Aorta (tissue), 5 donors: ENCODE measurements at regions of chr22 and their contacts with region 1.

Region 1: DNA sequence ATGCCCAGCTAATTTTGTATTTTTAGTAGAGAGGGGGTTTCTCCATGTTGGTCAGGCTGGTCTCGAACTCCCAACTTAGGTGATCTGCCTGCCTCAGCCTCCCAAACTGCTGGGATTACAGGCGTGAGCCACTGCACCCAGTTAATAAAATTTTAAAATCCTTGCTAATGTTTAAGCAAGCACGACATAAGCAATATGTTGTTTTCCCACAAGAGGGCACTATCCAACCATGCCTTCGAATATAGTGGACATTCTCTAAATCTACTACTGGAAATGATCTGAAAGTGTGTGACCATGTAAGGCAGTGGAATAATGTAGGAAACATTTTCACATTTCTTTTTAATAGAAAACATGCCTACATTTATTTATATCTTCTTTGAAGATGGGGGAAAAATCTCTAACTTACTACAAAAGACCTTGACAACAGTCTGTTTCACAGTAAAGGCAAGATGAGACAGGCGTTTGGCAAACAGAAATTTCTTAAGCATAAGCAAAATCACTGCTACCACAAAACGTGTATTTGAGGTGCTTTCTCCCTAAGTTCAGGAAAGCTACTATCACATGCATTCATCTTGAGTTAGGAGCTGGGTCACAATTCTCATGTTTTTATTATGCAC is 38.2 kb downstream of the PITPNB start:
- DNase-seq: no peak
- ATAC-seq: peak; percentile 91
- H3K4me3 ChIP-seq: peak overlapping the region in 1 of 2 donors; percentile 34
- H3K27ac ChIP-seq: peak overlapping the region; percentile 2 to 77
- H3K4me1 ChIP-seq: peaks cover under 1 to 3% of the 10 kb centered on the region in 2 donors
- H3K27me3 ChIP-seq: no peaks in the 10 kb centered on the region

Region 2: DNA sequence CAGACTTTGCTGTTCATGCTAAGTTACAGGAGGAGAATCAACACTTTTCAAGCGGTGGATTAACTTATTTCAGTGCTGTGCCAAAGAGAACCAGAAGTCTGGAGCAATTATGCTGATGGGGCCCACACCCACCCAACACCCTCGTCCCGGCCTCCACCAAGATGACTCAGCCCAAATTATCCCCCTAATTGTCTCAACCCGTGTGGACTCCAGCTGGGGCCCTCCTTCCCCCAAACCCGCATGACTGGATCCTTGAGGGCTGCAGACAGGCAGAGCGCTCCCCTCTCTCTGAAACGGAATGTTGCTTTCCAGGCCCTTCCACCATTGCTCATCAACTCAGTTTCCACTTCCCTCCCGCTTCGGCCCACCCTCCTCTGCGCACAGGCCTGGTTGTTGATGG is 44.7 kb before region 1 on chr22:
- intact Hi-C with region 1: no loop called
- DNase-seq: peak in 1 of 2 donors; percentile 24
- ATAC-seq: no peak
- H3K4me3 ChIP-seq: no peak overlapping the region
- H3K27ac ChIP-seq: no peak overlapping the region
- H3K4me1 ChIP-seq: no peaks in the 10 kb centered on the region
- H3K27me3 ChIP-seq: no peaks in the 10 kb centered on the region

Region 3: DNA sequence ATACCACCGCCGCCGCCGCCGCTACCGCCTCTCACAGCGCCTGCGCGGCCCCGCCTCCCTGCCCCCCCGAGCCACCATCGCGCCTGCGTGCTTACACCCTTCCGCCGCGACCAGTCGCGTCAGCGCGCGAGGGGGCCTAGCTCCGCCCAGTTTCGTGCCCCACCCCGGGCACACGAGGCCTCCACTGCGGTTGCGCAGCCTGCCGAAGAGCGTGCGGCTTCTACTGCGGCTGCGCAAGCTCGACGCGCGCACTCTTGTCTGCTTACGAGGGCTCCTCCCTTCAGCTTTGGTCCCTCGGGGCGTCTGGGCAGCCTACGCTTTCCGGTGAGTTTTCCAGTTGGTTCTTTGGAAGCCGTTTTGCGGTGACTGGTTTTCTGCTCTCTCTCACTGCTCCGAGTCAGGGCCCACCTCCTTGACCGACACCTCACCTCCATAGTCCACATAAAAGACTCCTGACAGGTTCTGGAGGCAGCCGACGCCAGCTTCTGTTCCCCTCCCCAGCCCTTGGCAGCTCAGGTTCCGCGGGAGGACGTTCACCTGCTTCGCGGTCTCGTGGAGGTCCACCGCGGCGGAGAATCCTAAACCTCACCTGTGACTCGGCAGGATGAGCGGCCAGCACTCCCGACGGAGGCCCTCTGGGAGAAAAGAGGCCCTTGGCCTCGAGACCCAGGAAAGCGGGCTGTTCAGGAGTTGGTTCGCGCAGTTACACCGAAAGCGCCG is 38.5 kb after region 1 on chr22 and contains the start of gene PITPNB:
- intact Hi-C with region 1: loop called (anchors 2 to 5 kb)
- DNase-seq: peak; percentile 99 to 100
- ATAC-seq: peak; percentile 99
- H3K4me3 ChIP-seq: peak within 1 kb of the TSS; percentile 32 to 74
- H3K27ac ChIP-seq: peak within 1 kb of the TSS; percentile 86 to 100
- H3K4me1 ChIP-seq: peaks cover 2 to 5% of the 10 kb centered on the region in 2 donors
- H3K27me3 ChIP-seq: no peaks in the 10 kb centered on the region
- total RNA-seq, gene PITPNB: 130 to 162 TPM

Region 4: DNA sequence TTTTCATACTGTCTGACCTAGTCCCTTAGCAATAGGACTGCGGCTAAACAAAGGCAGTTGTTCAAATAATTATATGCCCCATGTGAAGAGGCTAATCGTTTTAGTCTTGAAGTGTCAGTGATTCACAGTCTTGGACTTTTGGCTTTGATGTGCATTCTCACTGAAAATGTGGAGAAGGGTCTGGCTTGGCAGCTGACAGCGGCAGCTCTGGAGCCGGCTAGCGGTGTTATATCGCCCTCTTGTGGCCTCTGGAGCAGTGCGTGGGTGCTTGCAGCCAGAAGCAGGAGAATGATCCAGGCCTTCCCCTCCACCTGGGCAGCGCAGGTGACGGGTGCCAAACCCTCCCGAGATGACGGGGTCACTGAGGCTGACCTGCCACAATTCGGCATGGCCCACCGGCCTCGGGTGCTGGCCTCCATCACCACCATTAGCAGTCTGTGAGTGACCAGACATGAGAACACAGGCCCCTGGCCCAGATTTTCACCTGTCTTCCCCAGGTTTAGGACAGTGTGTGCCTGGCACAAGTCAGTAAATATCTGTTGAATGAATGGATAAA is 128.5 kb after region 1 on chr22:
- intact Hi-C with region 1: loop called (anchors 2 kb)
- DNase-seq: peak; percentile 78 to 92
- ATAC-seq: peak; percentile 84
- H3K4me3 ChIP-seq: no peak overlapping the region
- H3K27ac ChIP-seq: no peak overlapping the region
- H3K4me1 ChIP-seq: no peaks in the 10 kb centered on the region
- H3K27me3 ChIP-seq: no peaks in the 10 kb centered on the region